Spleen (tissue), 13 donors: ENCODE measurements at regions of chr1 and their contacts with region 1.

Region 1: GRCh38 chr1:150532868-150533302 is 16.3 kb upstream of the ADAMTSL4 start:
- DNase-seq: peak; percentile 31
- H3K4me3 ChIP-seq: no peak overlapping the region
- H3K27ac ChIP-seq: no peak overlapping the region
- H3K4me1 ChIP-seq: no peaks in the 10 kb centered on the region
- H3K27me3 ChIP-seq: no peaks in the 10 kb centered on the region
- CTCF ChIP-seq: peak in 4 of 11 experiments; percentile 8 to 39 (median 34)
- POLR2A ChIP-seq: no peak

Region 2: DNA sequence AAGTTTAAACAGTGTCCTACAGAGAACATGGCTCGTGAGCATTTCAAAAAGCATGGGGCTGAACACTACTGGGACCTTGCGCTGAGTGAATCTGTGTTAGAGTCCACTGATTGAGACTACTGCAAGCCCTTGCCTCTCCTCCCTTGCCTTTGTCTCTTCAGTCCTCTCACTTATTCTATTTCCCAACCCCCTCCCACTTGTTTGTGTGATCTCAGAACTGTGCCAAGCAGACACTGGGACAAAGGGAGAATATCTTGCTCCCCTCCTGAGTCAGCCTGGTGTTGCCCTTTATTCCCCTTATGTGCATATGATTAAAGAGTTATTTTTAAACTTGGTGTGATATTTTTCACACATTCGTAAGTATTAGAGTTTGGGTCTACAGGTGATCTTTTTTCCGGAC is 180.0 kb before region 1 on chr1:
- intact Hi-C with region 1: no loop called
- DNase-seq: no peak
- H3K4me3 ChIP-seq: no peak overlapping the region
- H3K27ac ChIP-seq: no peak overlapping the region
- H3K4me1 ChIP-seq: no peaks in the 10 kb centered on the region
- H3K27me3 ChIP-seq: no peaks in the 10 kb centered on the region
- CTCF ChIP-seq: no peak
- POLR2A ChIP-seq: no peak

Region 3: DNA sequence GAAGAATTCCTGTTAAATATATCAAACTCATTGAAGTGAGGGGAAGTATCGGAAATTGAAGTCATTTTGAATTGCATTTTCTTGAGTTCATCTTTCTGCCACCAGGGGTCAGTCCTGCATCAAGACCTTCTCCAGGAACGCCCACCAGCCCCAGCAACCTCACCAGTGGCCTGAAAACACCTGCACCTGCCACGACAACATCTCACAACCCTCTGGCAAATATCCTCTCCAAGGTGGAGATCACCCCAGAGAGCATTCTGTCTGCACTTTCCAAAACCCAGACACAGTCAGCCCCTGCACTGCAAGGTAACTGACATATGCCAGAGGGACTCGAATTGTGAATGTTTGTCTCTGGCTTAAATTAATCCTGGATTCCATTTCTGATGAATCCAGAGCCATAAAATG is 68.5 kb before region 1 on chr1:
- intact Hi-C with region 1: loop called (anchors 5 kb)
- DNase-seq: peak; percentile 82
- H3K4me3 ChIP-seq: no peak overlapping the region
- H3K27ac ChIP-seq: no peak overlapping the region
- H3K4me1 ChIP-seq: peaks cover 0 to 5% (median 2%) of the 10 kb centered on the region in 6 donors
- H3K27me3 ChIP-seq: no peaks in the 10 kb centered on the region
- CTCF ChIP-seq: peak; percentile 54 to 82 (median 74)
- POLR2A ChIP-seq: no peak

Region 4: GRCh38 chr1:150650199-150650598 is 117.3 kb after region 1 on chr1:
- intact Hi-C with region 1: no loop called
- DNase-seq: no peak
- H3K4me3 ChIP-seq: no peak overlapping the region
- H3K27ac ChIP-seq: no peak overlapping the region
- H3K4me1 ChIP-seq: no peaks in the 10 kb centered on the region
- H3K27me3 ChIP-seq: no peaks in the 10 kb centered on the region
- CTCF ChIP-seq: no peak
- POLR2A ChIP-seq: no peak